CD8-positive, alpha-beta T cell (primary cell): ENCODE measurements at regions of chr20 and their contacts with region 1.

Region 1: DNA sequence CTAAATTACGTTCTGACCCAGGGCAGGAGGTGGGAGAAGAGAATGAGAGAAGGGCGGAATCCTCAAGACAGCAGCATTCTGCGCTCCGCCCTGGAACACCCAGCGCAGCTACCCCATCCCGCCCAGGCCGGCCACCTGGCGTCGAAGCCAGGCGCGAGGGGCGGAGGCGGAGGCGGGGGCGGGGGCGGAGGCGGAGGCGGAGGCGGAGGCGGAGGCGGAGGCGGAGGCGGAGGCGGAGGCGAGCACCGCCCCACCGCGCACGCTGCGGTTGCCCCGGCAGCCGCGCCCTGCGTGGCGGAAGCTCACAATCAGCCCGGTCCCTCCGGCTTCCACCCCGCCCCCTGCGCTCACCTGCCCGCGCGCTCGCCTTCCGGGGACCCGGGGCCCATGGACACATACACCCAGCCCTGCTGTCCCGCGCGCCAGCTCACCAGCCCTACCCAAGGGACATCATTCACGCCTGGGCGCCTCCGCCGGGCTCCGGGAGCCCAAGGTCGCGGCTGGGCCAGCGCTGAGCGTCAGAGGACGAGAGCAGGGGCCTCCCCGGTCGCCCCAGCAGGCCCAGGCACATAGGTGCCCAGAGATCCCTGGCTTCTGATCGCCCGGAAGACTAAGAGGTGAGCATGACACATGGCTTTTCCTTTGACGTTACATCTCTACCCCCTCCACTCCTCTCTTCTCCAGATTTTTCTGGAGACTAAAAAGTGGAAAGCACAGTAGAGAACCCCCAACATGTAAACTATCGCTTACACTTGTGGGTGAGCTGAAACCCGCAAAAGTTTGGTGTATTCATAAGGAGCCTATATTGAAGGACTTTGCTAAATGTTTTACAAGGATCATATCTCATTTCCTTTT is at the start of gene ANKEF1:
- DNase-seq: peak; percentile 52 to 91 (median 80)
- ATAC-seq: peak; percentile 97
- H3K4me3 ChIP-seq: peak within 1 kb of the TSS; percentile 59 to 84
- H3K4me3 Mint-ChIP-seq: peak within 1 kb of the TSS; percentile 76
- H3K27ac ChIP-seq: peak within 1 kb of the TSS; percentile 65 to 79
- H3K27ac Mint-ChIP-seq: peak within 1 kb of the TSS; percentile 33
- H3K4me1 ChIP-seq: peaks cover 10% of the 10 kb centered on the region
- H3K4me1 Mint-ChIP-seq: peaks cover 18% of the 10 kb centered on the region
- H3K27me3 ChIP-seq: no peaks in the 10 kb centered on the region
- H3K27me3 Mint-ChIP-seq: peaks cover 6% of the 10 kb centered on the region
- CTCF ChIP-seq: no peak
- total RNA-seq, gene ANKEF1: 0.52 to 0.58 TPM

Region 2: DNA sequence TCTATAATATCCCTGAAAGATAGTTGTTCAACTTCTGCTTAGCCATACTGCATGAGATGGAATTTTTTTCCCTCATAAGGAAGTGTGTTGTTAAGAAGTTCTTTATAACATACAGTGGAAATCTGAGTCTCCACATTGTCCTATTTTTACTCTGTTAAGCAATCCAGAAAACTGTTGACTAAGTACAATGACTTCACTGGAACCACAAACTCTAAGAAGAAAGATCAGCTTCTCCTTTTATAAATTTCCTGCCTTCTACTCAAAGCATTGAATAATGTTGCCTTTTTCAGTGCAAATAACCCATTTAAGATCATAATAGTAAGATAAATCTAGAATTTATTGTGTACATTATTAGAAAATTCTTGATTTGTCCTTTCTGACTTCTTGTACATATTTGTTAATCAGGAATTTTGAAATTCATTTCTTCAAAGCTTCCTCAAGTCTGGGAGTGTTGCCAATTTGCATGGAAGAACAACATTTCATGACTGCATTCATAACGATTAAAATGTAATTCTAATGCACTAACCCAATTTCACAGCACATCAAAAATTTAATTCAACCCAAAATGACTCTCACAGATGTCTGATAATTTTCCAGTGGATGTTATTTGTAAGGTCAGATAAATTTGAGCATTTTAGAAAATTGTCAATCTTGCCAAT is 45.7 kb before region 1 on chr20:
- CTCF ChIA-PET with region 1: no interaction called
- POLR2A ChIA-PET with region 1: no interaction called
- intact Hi-C with region 1: no loop called
- DNase-seq: no peak
- ATAC-seq: no peak
- H3K4me3 ChIP-seq: no peak overlapping the region
- H3K4me3 Mint-ChIP-seq: no peak overlapping the region
- H3K27ac ChIP-seq: no peak overlapping the region
- H3K27ac Mint-ChIP-seq: no peak overlapping the region
- H3K4me1 ChIP-seq: no peaks in the 10 kb centered on the region
- H3K4me1 Mint-ChIP-seq: no peaks in the 10 kb centered on the region
- H3K27me3 ChIP-seq: no peaks in the 10 kb centered on the region
- H3K27me3 Mint-ChIP-seq: peaks cover 12% of the 10 kb centered on the region
- CTCF ChIP-seq: no peak

Region 3: DNA sequence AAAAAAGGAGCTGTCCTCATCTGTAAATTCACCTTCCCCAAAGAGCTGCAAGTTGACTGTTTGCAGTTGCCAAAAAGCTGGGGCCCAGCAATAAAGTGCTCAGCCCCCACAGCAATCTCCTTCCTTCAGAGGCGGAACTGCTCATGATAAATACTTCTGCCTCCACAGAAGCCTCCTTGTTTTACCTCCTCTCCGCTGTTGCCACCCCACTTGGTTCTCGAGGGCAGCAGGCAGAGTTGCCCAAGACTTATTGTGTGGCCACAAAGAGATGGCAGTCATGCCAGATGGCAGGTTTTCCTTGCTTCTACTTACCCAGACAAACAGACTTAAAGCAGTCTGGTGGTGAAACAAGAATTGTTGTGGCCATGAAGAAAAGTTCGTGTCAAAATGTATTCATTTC is 466.5 kb after region 1 on chr20:
- CTCF ChIA-PET with region 1: no interaction called
- POLR2A ChIA-PET with region 1: no interaction called
- intact Hi-C with region 1: loop called in 1 of 2 experiments (anchors 10 kb)
- DNase-seq: peak in 7 of 9 experiments; percentile 6 to 68 (median 28)
- ATAC-seq: peak; percentile 41
- H3K4me3 ChIP-seq: peak overlapping the region; percentile 46 to 51
- H3K4me3 Mint-ChIP-seq: peak overlapping the region; percentile 88
- H3K27ac ChIP-seq: peak overlapping the region; percentile 49 to 77
- H3K27ac Mint-ChIP-seq: peak overlapping the region; percentile 97
- H3K4me1 ChIP-seq: peaks cover 10% of the 10 kb centered on the region
- H3K4me1 Mint-ChIP-seq: peaks cover 39% of the 10 kb centered on the region
- H3K27me3 ChIP-seq: no peaks in the 10 kb centered on the region
- H3K27me3 Mint-ChIP-seq: no peaks in the 10 kb centered on the region
- CTCF ChIP-seq: no peak